ENCODE measurements at regions of chr6 and their contacts with region 1.

Region 1: DNA sequence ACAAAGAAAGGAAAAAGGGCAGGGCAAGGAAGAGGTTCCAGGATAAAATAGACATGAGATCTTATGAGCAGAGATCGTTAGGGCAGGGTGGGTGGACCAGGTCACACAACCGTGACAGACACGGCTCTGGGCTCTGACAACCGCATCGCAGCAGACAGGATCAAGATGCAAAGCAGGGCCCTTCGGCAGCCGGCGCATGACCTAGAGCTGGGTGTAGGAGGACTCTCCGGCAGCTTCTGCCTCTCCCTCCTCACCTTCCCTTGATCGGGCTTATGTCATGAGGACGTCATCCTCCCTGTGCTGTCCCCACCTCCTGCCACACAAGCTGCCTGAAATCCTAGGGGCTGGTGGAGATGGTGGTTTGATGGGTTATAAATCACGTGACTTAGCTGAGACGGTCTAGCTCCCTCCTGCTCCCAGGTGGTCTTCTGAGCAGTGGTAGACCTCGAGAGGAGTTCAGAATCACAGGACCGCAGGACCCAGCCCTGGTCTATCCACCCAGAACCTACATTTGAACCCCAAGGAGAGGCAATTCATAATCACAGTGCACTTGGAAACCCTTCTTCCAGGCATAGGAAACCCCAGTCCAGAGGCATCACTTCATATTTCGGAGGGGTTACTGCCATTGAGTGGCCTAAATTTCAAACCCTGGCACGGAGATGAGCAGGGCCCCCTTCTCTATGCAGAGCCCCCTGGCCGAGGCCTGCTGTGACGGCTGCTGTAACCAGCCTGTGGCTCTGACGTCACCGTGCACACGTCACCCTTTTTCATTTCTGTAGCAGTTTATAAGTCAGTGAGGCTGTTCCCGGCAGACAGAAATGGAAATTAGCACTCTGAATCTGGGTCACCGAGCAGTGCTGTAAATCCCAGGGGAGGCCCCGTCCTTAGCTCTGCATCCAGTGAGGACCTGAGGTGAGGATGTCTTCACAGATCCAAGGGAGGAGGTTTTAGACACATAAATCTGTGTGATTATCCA is 8.7 kb upstream of the CCR6 start:
- DNase-seq: peak; percentile 93
- ATAC-seq: peak; percentile 90
- H3K4me3 ChIP-seq: peak overlapping the region; percentile 30; the same call in 1 of the 2 replicates
- H3K27ac ChIP-seq: peak overlapping the region; percentile 94
- H3K4me1 ChIP-seq: peaks cover 54% of the 10 kb centered on the region
- H3K27me3 ChIP-seq: no peaks in the 10 kb centered on the region
- CTCF ChIP-seq: no peak
- EP300 ChIP-seq: peak; percentile 83 to 91
- POLR2A ChIP-seq: peak; percentile 65
- RAD21 ChIP-seq: 0 out of 2 replicates have a peak, but pooled peaks have one; percentile 1

Region 2: DNA sequence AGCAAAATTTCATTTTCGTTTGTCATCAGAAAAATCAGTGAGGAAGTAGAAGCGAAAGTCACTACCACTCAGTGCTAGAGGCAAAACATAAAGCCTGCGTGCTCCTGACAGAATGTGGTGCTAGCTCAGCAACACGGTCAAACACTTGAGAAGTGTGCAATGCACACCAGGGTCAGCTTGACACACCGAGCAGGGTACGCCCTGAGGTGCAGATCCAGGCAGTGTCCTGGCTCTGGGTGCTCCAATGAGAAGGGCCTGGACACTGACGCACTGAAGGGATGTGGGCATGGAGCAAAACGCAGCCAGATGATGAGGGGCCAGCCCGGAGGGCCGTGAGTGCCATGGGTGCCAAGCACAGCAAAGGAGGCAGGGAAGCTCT is 163.8 kb before region 1 on chr6:
- CTCF ChIA-PET with region 1: interaction called, 5 read pairs
- POLR2A ChIA-PET with region 1: interaction called, 3 read pairs
- RAD21 ChIA-PET with region 1: interaction called, 10 read pairs
- SMC1A ChIA-PET with region 1: interaction called, 8 read pairs
- in situ Hi-C with region 1: no loop called
- intact Hi-C with region 1: no loop called
- DNase-seq: no peak
- ATAC-seq: peak; percentile 68
- H3K4me3 ChIP-seq: peak overlapping the region; percentile 71
- H3K27ac ChIP-seq: peak overlapping the region; percentile 96
- H3K4me1 ChIP-seq: peaks cover 42% of the 10 kb centered on the region
- H3K27me3 ChIP-seq: no peaks in the 10 kb centered on the region
- CTCF ChIP-seq: no peak
- EP300 ChIP-seq: no peak
- POLR2A ChIP-seq: peak; percentile 76
- RAD21 ChIP-seq: no peak

Region 3: DNA sequence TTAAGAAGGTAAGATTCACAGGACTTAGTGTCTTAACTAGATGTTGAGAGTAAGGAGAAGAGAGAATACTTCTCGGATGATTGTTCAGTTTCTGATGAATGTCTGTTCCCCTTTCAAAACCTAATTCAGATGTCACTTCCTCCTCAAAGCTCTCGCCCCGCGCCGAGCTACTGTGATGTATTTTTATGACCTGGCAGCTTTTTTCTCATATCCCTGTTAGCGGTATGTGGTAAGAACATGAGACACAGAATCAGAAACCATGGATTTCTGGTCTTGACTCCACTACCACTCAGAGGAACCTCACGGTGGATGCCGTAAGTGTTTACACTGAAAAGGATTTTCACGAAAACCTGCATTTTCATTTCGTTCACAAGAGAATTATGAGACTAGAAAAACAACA is 66.7 kb before region 1 on chr6:
- CTCF ChIA-PET with region 1: interaction called, 15 read pairs
- POLR2A ChIA-PET with region 1: interaction called, 10 read pairs
- RAD21 ChIA-PET with region 1: interaction called, 39 read pairs
- SMC1A ChIA-PET with region 1: interaction called, 9 read pairs
- in situ Hi-C with region 1: no loop called
- intact Hi-C with region 1: no loop called
- DNase-seq: peak; percentile 86
- ATAC-seq: peak; percentile 87
- H3K4me3 ChIP-seq: peak overlapping the region; percentile 36; the same call in 1 of the 2 replicates
- H3K27ac ChIP-seq: peak overlapping the region; percentile 89
- H3K4me1 ChIP-seq: peaks cover 36% of the 10 kb centered on the region
- H3K27me3 ChIP-seq: no peaks in the 10 kb centered on the region
- CTCF ChIP-seq: no peak
- EP300 ChIP-seq: peak; percentile 74 to 77; a peak in 3 of 4 replicates
- POLR2A ChIP-seq: no peak
- RAD21 ChIP-seq: no peak

Region 4: GRCh38 chr6:167103041-167103891 is 11.0 kb before region 1 on chr6:
- CTCF ChIA-PET with region 1: interaction called, 20 read pairs
- POLR2A ChIA-PET with region 1: interaction called, 17 read pairs
- RAD21 ChIA-PET with region 1: interaction called, 22 read pairs
- SMC1A ChIA-PET with region 1: interaction called, 18 read pairs
- in situ Hi-C with region 1: no loop called
- intact Hi-C with region 1: no loop called
- DNase-seq: no peak
- ATAC-seq: peak; percentile 92
- H3K4me3 ChIP-seq: no peak overlapping the region
- H3K27ac ChIP-seq: peak overlapping the region; percentile 60
- H3K4me1 ChIP-seq: peaks cover 31% of the 10 kb centered on the region
- H3K27me3 ChIP-seq: no peaks in the 10 kb centered on the region
- CTCF ChIP-seq: no peak
- EP300 ChIP-seq: peak; percentile 34 to 56; a peak in 2 of 4 replicates
- POLR2A ChIP-seq: no peak
- RAD21 ChIP-seq: no peak

Region 5: GRCh38 chr6:167153521-167153959 is 39.3 kb after region 1 on chr6:
- CTCF ChIA-PET with region 1: no interaction called
- POLR2A ChIA-PET with region 1: no interaction called
- RAD21 ChIA-PET with region 1: interaction called, 5 read pairs
- SMC1A ChIA-PET with region 1: interaction called, 8 read pairs
- in situ Hi-C with region 1: no loop called
- intact Hi-C with region 1: loop called (anchors 5 kb)
- DNase-seq: peak; percentile 78
- ATAC-seq: peak; percentile 71
- H3K4me3 ChIP-seq: peak overlapping the region; percentile 54
- H3K27ac ChIP-seq: peak overlapping the region; percentile 70
- H3K4me1 ChIP-seq: peaks cover 30% of the 10 kb centered on the region
- H3K27me3 ChIP-seq: no peaks in the 10 kb centered on the region; a peak in 1 of 4 replicates
- CTCF ChIP-seq: no peak
- EP300 ChIP-seq: peak; percentile 81; a peak in 3 of 4 replicates
- POLR2A ChIP-seq: no peak
- RAD21 ChIP-seq: no peak

Measured in GM12878 (cell line).